Left ventricle myocardium superior (tissue), 1 donor: ENCODE measurements at regions of chr15 and their contacts with region 1.

Region 1: DNA sequence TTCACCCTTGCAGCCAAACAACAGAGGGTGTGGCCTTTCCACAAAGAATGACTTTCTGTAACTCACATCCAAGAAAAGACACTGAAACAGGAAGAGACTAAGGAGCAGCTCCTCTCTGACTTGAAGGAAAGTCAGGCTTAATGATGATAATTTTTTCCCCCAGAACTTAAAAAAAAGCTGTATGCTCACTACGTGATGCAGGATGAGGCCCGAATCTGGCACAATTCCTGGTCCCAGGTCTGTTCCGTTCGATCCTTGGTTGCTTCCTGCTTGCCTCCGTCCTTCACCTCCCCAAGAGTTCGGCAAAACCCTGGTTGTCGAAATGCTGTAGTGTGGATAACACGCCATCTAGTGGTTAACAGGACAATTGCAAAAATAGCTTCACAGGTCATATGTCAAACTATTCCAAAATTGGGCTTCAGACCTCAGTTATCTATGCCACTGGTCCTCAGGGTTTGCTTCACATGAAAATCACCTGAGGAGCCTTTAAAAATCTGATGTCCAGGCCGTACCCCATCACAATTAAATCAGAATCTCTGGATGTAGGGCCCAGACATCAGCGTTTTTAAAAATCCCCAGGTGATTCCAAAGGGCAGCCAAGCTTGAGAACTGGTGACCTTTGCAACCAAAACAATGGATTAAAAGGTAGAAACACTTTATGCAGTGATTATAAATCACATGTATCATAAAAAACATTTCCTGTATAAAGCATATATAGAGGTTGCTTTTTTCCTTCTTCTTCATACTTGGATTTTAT is 28.1 kb upstream of the SYNM start:
- DNase-seq: no peak
- ATAC-seq: peak; percentile 89

Region 2: DNA sequence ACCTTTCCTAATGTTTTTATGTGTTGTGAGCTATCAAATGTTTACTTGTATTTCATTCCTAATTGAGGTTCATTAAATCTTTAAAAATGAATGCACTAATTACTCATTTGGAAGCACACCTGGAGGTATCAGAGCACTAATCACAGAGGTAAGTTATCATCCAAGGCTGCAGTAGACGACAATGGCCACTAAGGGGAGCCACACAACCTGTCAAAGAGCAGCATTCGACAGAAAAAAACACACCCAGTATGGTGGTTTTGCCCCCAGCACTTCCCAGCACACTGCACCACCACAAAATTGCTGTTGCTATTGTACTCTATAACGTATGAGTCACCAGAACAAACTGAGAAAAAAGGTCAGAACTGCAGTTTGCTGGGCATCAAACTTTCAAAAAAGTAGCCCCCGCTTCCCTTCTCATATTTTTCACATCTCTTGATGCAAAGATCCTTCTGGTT is 634.3 kb before region 1 on chr15:
- intact Hi-C with region 1: loop called (anchors 5 kb)
- DNase-seq: no peak
- ATAC-seq: peak; percentile 52

Region 3: DNA sequence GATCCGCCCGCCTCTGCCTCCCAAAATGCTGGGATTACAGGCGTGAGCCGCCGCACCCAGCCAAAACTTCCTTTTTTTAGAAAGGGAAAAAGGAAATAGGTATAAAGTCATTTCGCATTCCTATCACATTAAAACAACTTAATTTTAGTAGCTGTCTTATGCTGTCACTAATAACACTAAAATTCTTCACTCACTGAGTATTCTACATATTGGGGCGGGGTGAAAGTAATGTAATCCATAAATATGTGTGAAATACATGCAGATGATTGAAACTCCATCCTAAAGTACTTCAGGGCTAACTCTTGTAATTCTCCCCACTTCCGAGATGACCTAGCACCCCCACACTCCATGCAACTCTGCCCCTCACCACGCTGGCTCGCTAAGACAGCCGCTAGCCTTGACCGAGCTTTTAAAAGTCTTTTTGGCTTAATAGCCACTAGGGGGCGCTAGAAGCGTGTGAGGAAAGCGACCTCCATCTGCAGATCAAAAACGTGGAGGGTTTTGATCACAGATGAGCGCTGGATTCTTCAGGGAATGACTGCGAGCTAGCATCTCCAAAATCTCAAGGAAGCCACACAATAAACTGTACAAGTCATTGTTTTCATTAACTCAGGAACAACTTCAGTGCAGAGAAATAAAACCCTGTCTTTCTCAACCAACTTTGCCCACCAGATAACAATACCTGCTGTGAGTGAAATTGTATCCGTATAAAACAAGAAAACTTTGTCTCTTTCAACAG is 557.7 kb before region 1 on chr15:
- intact Hi-C with region 1: loop called (anchors 2 kb)
- DNase-seq: no peak
- ATAC-seq: peak; percentile 83

Region 4: DNA sequence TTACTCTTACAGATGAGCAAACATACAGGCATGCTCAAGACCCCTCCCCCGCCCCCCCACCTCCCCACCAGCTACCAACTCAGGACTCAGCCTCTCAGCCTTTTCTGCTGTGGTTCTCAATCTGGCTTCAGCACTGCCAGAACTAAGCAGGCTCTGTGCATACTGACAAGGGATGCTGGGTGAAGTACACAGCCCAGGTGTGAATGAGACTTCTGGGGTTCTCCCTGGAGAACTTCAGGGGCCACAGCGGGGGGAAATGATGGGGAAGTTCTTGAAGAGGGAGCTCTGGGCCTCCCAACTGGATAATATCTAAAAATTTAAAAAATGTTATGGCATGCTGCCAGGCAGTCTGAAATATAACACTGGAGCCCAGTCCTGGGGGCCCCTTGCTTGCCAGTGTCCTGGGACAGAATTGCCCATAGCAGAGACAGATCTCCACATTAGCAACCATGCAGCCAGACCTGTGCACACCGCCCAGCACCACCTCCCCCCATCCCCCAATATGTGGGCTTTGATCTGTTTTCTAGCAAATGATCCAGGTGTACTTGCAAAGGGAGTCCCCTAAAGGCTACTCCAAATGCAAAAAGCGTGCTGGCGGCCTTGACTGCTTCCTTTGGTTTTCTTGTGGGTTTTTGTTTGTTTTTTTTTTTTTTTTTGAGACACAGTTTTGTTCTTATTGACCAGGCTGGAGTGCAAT is 110.5 kb before region 1 on chr15:
- intact Hi-C with region 1: no loop called
- DNase-seq: no peak
- ATAC-seq: no peak

Region 5: DNA sequence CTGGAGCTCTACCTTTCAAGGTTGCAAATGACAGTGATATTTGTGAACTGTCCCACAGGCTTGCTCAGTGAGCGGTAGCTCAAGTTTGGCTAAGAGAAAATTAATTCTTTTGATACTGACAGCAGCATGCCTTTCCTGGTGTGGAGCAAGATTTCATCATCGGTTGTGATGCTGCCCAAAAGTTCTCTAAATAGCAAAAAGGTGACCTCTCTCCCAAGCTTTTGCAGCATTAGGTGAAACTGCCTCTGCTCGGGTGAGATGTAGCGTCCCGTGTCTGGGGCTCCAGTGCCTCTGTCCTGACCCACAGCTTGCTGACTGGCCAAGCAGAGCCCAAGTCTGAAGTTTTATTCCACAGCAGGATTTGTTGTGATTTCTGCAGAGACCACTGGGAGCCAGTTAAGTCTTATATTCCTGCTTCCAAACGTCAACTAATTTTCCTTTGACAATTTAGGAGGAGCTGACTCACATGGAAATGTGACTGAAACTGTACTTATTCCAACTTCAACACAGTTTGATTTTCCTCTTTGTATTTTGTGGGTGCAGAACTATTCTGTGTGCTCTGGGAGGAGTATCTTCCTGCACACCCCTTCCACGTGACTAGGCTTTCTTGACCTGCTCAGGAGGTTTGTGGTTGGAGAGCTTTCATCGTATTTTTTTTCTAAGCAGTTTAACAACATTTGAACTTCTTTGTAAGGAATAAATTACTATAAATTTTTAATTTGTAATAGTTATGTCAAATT is 34.0 kb after region 1 on chr15:
- intact Hi-C with region 1: no loop called
- DNase-seq: peak; percentile 8
- ATAC-seq: no peak